ENCODE measurements at regions of chr15 and their contacts with region 1.

Region 1: DNA sequence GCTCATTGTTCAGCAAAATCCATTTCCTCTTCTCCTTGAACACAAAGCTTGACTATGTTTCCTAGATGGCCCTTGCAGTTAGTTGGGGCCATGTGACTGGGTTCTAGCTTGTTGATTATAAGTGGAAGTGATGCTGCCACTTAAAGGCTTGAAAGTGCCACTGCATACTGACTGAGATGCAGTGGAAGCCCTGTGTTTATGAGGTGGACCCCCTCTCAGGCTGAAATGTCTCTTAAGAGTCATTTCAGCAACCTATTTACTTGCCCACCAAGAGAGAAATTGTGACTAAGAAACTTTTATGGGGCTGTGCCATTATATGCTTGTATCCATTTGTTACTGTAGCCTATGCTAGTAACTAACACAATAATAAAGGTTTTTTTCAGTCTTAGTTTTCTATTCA is 8.4 kb upstream of the ANP32A start:
- DNase-seq: no peak
- H3K4me3 Mint-ChIP-seq: no peak overlapping the region
- H3K27ac Mint-ChIP-seq: no peak overlapping the region
- H3K4me1 Mint-ChIP-seq: peaks cover 21% of the 10 kb centered on the region
- H3K27me3 Mint-ChIP-seq: peaks cover 5% of the 10 kb centered on the region

Region 2: GRCh38 chr15:68730471-68730919 is 98.6 kb before region 1 on chr15:
- intact Hi-C with region 1: loop called (anchors 2 kb)
- DNase-seq: no peak
- H3K4me3 Mint-ChIP-seq: no peak overlapping the region
- H3K27ac Mint-ChIP-seq: no peak overlapping the region
- H3K4me1 Mint-ChIP-seq: peaks cover 5% of the 10 kb centered on the region
- H3K27me3 Mint-ChIP-seq: peaks cover 11% of the 10 kb centered on the region

Region 3: DNA sequence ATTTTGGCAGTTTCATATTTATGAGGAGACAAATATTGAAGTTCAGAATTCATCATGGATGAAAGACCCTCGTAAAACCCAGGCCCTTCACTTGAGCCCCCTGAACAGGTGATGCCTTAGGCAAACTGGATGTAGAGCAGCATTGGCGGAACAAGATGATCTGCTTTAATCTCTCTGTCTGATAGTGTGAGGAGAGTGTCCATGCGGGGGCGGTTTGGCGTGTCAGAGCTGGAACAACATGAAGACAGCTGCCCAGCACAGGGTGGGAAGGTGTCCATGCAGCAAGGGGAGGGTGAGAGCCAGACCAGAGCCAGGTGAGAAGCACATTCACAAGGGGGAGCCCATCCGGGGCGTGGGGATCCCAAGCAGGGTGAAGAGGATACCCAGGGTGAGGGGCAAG is 23.4 kb after region 1 on chr15:
- intact Hi-C with region 1: no loop called
- DNase-seq: no peak
- H3K4me3 Mint-ChIP-seq: no peak overlapping the region
- H3K27ac Mint-ChIP-seq: no peak overlapping the region
- H3K4me1 Mint-ChIP-seq: no peaks in the 10 kb centered on the region
- H3K27me3 Mint-ChIP-seq: peaks cover 32% of the 10 kb centered on the region

Measured in activated T-helper 1 cell treated with anti-CD3 and anti-CD28 coated beads, Interleukin-12 subunit alpha, Interleukin-12 subunit beta, Interleukin-2, Interleukin-4 antibody, amounts not matched to agents 30 ng/mL and 10 ng/mL and 1 ng/mL, durations not matched to agents 14 hours and 24 hours and 36 hours (primary cell).